HEK293 (cell line): ENCODE measurements at regions of chr12 and their contacts with region 1.

Region 1: GRCh38 chr12:126747530-126748149 is 1519.3 kb upstream of the TMEM132C start:
- H3K4me3 ChIP-seq: no peak overlapping the region
- H3K27ac ChIP-seq: no peak overlapping the region
- H3K4me1 ChIP-seq: no peaks in the 10 kb centered on the region
- CTCF ChIP-seq: no peak; the same call in 1 of the 2 replicates

Region 2: GRCh38 chr12:126727218-126728075 is 20.2 kb before region 1 on chr12:
- CTCF ChIA-PET with region 1: interaction called, 18 read pairs
- POLR2A ChIA-PET with region 1: no interaction called
- H3K4me3 ChIP-seq: no peak overlapping the region
- H3K27ac ChIP-seq: no peak overlapping the region
- H3K4me1 ChIP-seq: no peaks in the 10 kb centered on the region
- CTCF ChIP-seq: no peak